ENCODE measurements at regions of chr21 and their contacts with region 1.

Region 1: DNA sequence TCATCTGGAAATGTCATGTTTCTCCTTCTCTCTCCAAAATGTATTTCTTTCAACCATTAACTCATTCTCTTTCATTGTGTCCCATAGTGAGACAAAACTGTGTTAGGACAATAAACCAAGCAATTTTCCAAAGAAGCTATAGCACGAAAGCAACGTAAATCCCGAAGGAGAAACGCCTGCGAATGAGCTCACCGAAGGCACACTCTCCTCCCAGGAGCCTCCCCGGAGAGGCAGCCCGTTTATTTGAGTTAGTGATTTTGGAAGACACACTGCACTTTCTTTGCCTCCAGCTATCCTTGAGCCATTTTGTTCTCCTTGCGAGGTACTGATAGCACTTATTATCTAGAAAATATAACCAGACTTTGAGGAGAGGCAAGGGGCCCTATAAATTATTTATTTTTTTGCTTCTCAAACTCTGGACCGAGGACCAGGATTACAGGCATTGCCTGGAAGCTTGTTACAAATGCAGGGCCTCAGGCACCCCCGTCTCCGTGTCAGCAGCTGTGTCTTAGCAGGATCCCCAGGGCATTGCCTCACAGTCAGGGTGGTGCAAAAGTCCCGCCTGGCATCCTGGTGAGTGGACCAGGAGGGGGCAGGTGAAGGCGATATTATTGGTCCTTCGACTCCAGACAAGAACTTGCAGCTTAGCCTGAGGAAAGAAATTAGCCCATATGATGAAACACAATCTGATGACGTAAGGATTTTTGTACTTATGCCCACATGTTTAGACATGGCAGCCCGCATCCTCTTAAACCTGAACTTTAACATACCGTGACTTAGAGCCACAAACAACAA is 41.0 kb downstream of the RSPH1 start:
- DNase-seq: no peak
- H3K4me3 ChIP-seq: no peak overlapping the region
- H3K27ac ChIP-seq: no peak overlapping the region
- H3K4me1 ChIP-seq: no peaks in the 10 kb centered on the region
- H3K27me3 ChIP-seq: no peaks in the 10 kb centered on the region
- CTCF ChIP-seq: no peak

Region 2: DNA sequence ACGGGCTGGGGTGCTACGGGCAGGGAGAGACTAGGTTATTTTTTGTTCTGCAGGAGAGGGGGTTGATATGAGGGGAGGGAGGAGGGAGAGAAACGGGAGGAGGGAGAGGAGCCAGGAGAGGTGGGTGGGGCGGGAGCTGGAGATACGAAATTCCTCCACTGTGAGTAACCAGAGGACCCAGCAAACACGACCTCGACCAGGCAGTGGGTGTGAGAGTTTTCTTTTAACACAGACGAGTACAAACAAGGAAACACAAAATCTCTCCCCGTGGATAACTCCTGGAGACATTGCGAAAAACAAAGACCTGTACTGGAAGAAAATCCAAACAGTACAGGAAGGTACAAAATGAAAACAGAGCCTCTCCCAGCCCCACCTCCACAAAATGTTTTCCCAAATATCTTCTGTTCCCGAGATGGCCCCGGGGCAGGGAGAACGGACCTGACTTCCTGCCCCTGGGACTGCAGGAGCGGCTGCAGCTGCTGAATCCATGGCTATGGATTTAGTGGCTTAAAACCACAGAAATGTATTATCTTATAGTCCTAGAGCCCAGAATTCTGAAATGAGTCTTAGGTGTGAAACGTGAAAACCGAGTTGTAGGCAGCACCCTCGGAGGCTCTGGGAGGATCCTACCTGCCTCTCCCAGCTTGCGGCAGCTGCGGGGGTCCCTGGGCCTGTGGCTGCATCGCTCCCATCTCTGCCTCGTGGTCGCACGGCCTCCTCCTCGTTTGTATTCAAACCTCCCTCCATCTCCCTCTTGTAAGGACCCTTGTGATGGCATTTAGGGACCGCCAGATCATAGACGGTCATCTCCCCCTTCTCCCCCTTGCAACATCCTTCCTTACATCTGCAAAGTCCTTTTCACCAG is 770.4 kb before region 1 on chr21:
- CTCF ChIA-PET with region 1: no interaction called
- POLR2A ChIA-PET with region 1: no interaction called
- intact Hi-C with region 1: loop called (anchors 5 kb)
- DNase-seq: peak; percentile 69 to 92
- H3K4me3 ChIP-seq: peak overlapping the region; percentile 7; the same call in 1 of the 2 replicates
- H3K27ac ChIP-seq: peak overlapping the region; percentile 99
- H3K4me1 ChIP-seq: peaks cover 77% of the 10 kb centered on the region
- H3K27me3 ChIP-seq: no peaks in the 10 kb centered on the region
- CTCF ChIP-seq: no peak

Region 3: GRCh38 chr21:42145569-42146272 is 309.3 kb before region 1 on chr21:
- CTCF ChIA-PET with region 1: no interaction called
- POLR2A ChIA-PET with region 1: no interaction called
- intact Hi-C with region 1: loop called (anchors 1 kb)
- DNase-seq: peak in 1 of 2 experiments; percentile 44
- H3K4me3 ChIP-seq: no peak overlapping the region
- H3K27ac ChIP-seq: no peak overlapping the region
- H3K4me1 ChIP-seq: no peaks in the 10 kb centered on the region
- H3K27me3 ChIP-seq: no peaks in the 10 kb centered on the region
- CTCF ChIP-seq: peak; percentile 84

Region 4: GRCh38 chr21:42164064-42164789 is 290.8 kb before region 1 on chr21:
- CTCF ChIA-PET with region 1: no interaction called
- POLR2A ChIA-PET with region 1: no interaction called
- intact Hi-C with region 1: loop called (anchors 1 kb)
- DNase-seq: peak in 1 of 2 experiments; percentile 29
- H3K4me3 ChIP-seq: no peak overlapping the region
- H3K27ac ChIP-seq: no peak overlapping the region
- H3K4me1 ChIP-seq: no peaks in the 10 kb centered on the region
- H3K27me3 ChIP-seq: no peaks in the 10 kb centered on the region
- CTCF ChIP-seq: peak; percentile 71

Region 5: DNA sequence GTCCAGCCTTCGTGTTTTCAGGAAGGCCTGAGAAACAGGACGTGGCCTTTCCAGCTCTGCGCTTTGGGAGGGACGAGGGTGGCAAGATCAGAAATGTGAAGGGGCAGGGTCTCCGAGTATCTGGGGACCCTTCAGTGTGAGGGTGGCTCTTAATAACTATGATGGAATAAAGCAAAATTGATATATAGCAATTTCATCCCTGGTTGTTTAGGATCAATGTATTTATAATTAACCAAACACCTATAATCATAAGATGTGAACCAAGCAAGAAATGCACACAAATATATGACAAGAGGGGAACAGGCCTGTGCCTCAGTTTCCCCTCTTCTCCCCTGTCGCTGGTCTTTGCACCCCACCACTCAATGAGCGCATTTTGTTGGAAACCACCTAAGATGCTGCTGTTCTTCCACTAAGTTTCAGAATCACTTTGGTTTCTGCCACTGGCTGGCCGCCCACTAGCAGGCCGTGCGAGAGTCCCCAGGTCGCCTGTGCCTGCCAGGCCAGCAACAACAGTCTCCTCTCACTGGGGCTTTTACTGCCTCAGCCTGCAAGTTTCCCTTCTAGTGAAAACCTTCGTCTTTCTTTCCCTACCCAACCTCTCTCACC is 14.7 kb before region 1 on chr21:
- CTCF ChIA-PET with region 1: no interaction called
- POLR2A ChIA-PET with region 1: no interaction called
- intact Hi-C with region 1: no loop called
- DNase-seq: no peak
- H3K4me3 ChIP-seq: no peak overlapping the region
- H3K27ac ChIP-seq: no peak overlapping the region
- H3K4me1 ChIP-seq: no peaks in the 10 kb centered on the region
- H3K27me3 ChIP-seq: 0 out of 2 replicates have a peak, but pooled peaks cover 1% of the 10 kb centered on the region
- CTCF ChIP-seq: no peak

Region 6: DNA sequence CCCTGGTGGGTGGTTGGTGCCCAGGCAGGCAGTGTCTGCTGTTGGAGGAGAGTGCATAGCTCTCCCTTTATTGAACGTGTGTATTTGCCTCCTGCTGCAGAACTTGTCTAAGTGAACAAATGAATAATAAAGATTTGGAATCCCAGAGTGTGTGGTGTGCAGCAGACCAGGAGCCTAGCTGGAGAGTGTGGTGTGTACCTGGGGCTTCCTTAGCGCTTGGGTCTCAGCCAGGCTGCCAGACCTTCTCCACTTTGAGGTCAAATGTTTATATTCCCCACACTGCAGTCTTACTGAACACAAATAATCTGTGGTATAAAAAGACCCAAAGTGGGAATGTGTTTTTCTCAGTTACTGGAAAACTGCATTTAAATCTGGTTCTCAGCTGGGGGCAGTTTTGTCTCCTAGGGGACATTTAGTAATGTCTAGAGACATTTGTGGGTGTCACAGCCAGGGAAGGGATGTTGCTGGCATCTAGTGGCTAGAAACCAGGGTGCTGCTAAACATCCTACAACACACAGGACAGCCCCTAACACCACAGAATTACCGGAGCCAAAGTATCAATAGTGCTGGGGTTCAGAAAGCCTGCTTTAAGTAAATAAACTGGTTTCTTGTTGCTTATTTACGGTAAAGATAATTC is 82.2 kb after region 1 on chr21:
- CTCF ChIA-PET with region 1: no interaction called
- POLR2A ChIA-PET with region 1: interaction called, 3 read pairs
- intact Hi-C with region 1: loop called (anchors 1 kb)
- DNase-seq: no peak
- H3K4me3 ChIP-seq: no peak overlapping the region
- H3K27ac ChIP-seq: no peak overlapping the region
- H3K4me1 ChIP-seq: no peaks in the 10 kb centered on the region
- H3K27me3 ChIP-seq: no peaks in the 10 kb centered on the region
- CTCF ChIP-seq: peak; percentile 30; the same call in 1 of the 2 replicates

Measured in PC-9 (cell line).